ENCODE measurements at regions of chr12 and their contacts with region 1.

Region 1: GRCh38 chr12:122793685-122794106 is 19.3 kb downstream of the CCDC62 start:
- DNase-seq: peak in 4 of 9 experiments; percentile 10 to 74 (median 58)
- ATAC-seq: peak; percentile 62
- H3K4me3 ChIP-seq: no peak overlapping the region
- H3K4me3 Mint-ChIP-seq: no peak overlapping the region
- H3K27ac ChIP-seq: no peak overlapping the region
- H3K27ac Mint-ChIP-seq: no peak overlapping the region
- H3K4me1 ChIP-seq: no peaks in the 10 kb centered on the region
- H3K4me1 Mint-ChIP-seq: peaks cover 3% of the 10 kb centered on the region
- H3K27me3 ChIP-seq: no peaks in the 10 kb centered on the region
- H3K27me3 Mint-ChIP-seq: no peaks in the 10 kb centered on the region
- CTCF ChIP-seq: peak; percentile 80

Region 2: GRCh38 chr12:122803937-122804336 is 10.2 kb after region 1 on chr12:
- CTCF ChIA-PET with region 1: interaction called, 16 read pairs
- POLR2A ChIA-PET with region 1: no interaction called
- intact Hi-C with region 1: no loop called
- DNase-seq: no peak
- ATAC-seq: no peak
- H3K4me3 ChIP-seq: no peak overlapping the region
- H3K4me3 Mint-ChIP-seq: no peak overlapping the region
- H3K27ac ChIP-seq: no peak overlapping the region
- H3K27ac Mint-ChIP-seq: no peak overlapping the region
- H3K4me1 ChIP-seq: no peaks in the 10 kb centered on the region
- H3K4me1 Mint-ChIP-seq: no peaks in the 10 kb centered on the region
- H3K27me3 ChIP-seq: no peaks in the 10 kb centered on the region
- H3K27me3 Mint-ChIP-seq: no peaks in the 10 kb centered on the region
- CTCF ChIP-seq: no peak

Region 3: DNA sequence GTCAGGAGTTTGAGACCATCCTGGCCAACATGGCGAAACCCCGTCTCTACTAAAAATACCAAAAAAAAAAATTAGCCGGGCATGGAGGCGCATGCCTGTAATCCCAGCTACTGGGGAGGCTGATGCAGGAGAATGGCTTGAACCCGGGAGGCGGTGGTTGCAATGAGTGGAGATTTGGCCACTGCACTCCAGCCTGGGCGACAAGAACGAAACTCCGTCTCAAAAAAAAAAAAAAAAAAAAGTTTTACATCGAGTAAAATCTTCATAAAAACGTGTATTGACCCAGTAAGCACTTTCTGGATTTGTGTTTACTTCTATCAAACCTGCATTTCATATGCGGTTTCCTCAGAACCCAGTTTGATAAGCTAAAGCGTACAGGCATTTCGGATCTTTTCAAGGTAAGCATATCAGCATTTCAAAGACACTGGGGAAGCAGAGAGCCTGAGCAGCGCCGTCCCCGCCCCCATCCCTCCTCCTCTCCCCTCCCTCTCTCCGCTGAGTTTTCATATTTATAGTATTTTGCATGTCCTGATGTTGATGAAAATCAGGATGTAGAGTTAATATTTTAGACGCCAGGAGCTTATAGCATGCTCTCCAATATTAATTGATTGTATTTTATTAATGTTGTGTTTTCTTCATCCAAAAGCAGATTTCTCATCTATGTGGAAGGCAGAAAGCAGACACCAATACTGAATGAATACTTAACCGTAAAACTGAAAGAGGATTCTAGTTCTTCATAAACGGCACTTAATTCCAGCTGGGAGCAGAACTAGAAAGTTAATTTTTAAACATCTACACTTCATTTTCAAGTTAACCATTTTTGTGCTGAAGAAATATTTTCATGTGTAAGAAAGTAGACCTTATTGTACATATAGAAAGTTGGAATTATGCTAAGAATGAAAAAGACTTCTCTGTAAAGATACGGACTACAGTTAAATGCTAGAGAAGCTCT is 32.4 kb after region 1 on chr12:
- CTCF ChIA-PET with region 1: interaction called, 23 read pairs
- POLR2A ChIA-PET with region 1: no interaction called
- intact Hi-C with region 1: no loop called
- DNase-seq: no peak
- ATAC-seq: peak; percentile 48
- H3K4me3 ChIP-seq: no peak overlapping the region
- H3K4me3 Mint-ChIP-seq: peak overlapping the region; percentile 45
- H3K27ac ChIP-seq: no peak overlapping the region
- H3K27ac Mint-ChIP-seq: no peak overlapping the region
- H3K4me1 ChIP-seq: no peaks in the 10 kb centered on the region
- H3K4me1 Mint-ChIP-seq: peaks cover 4% of the 10 kb centered on the region
- H3K27me3 ChIP-seq: no peaks in the 10 kb centered on the region
- H3K27me3 Mint-ChIP-seq: no peaks in the 10 kb centered on the region
- CTCF ChIP-seq: no peak

Region 4: GRCh38 chr12:122860346-122861090 is 66.8 kb after region 1 on chr12:
- CTCF ChIA-PET with region 1: interaction called, 32 read pairs
- POLR2A ChIA-PET with region 1: interaction called, 6 read pairs
- intact Hi-C with region 1: loop called (anchors 1 to 2 kb)
- DNase-seq: peak; percentile 65 to 92 (median 82)
- ATAC-seq: peak; percentile 61
- H3K4me3 ChIP-seq: no peak overlapping the region
- H3K4me3 Mint-ChIP-seq: no peak overlapping the region
- H3K27ac ChIP-seq: no peak overlapping the region
- H3K27ac Mint-ChIP-seq: peak overlapping the region; percentile 57
- H3K4me1 ChIP-seq: peaks cover 5% of the 10 kb centered on the region
- H3K4me1 Mint-ChIP-seq: peaks cover 3% of the 10 kb centered on the region
- H3K27me3 ChIP-seq: no peaks in the 10 kb centered on the region
- H3K27me3 Mint-ChIP-seq: no peaks in the 10 kb centered on the region
- CTCF ChIP-seq: peak; percentile 64

Region 5: GRCh38 chr12:122871851-122872780 is 78.4 kb after region 1 on chr12:
- CTCF ChIA-PET with region 1: interaction called, 22 read pairs
- POLR2A ChIA-PET with region 1: no interaction called
- intact Hi-C with region 1: no loop called
- DNase-seq: peak in 4 of 9 experiments; percentile 36 to 65 (median 44)
- ATAC-seq: peak; percentile 43
- H3K4me3 ChIP-seq: peak overlapping the region; percentile 19 to 48
- H3K4me3 Mint-ChIP-seq: peak overlapping the region; percentile 85
- H3K27ac ChIP-seq: peak overlapping the region; percentile 3 to 78
- H3K27ac Mint-ChIP-seq: peak overlapping the region; percentile 86
- H3K4me1 ChIP-seq: peaks cover 62% of the 10 kb centered on the region
- H3K4me1 Mint-ChIP-seq: peaks cover 63% of the 10 kb centered on the region
- H3K27me3 ChIP-seq: no peaks in the 10 kb centered on the region
- H3K27me3 Mint-ChIP-seq: no peaks in the 10 kb centered on the region
- CTCF ChIP-seq: no peak

Region 6: GRCh38 chr12:123163227-123163626 is 369.5 kb after region 1 on chr12:
- CTCF ChIA-PET with region 1: no interaction called
- POLR2A ChIA-PET with region 1: no interaction called
- intact Hi-C with region 1: no loop called
- DNase-seq: no peak
- ATAC-seq: no peak
- H3K4me3 ChIP-seq: no peak overlapping the region
- H3K4me3 Mint-ChIP-seq: no peak overlapping the region
- H3K27ac ChIP-seq: no peak overlapping the region
- H3K27ac Mint-ChIP-seq: no peak overlapping the region
- H3K4me1 ChIP-seq: no peaks in the 10 kb centered on the region
- H3K4me1 Mint-ChIP-seq: no peaks in the 10 kb centered on the region
- H3K27me3 ChIP-seq: no peaks in the 10 kb centered on the region
- H3K27me3 Mint-ChIP-seq: no peaks in the 10 kb centered on the region
- CTCF ChIP-seq: no peak

Measured in CD8-positive, alpha-beta T cell (primary cell).